Common myeloid progenitor, CD34-positive (primary cell): ENCODE measurements at regions of chr12 and their contacts with region 1.

Region 1: GRCh38 chr12:95848575-95849388 is 10.0 kb upstream of the SNRPF start:
- DNase-seq: peak; percentile 38 to 56 (median 39)
- H3K4me3 ChIP-seq: no peak overlapping the region
- H3K27ac ChIP-seq: no peak overlapping the region
- H3K4me1 ChIP-seq: peaks cover 0 to 11% (median 5%) of the 10 kb centered on the region in 4 experiments
- H3K27me3 ChIP-seq: peaks cover 0 to 52% (median 15%) of the 10 kb centered on the region in 5 experiments

Region 2: DNA sequence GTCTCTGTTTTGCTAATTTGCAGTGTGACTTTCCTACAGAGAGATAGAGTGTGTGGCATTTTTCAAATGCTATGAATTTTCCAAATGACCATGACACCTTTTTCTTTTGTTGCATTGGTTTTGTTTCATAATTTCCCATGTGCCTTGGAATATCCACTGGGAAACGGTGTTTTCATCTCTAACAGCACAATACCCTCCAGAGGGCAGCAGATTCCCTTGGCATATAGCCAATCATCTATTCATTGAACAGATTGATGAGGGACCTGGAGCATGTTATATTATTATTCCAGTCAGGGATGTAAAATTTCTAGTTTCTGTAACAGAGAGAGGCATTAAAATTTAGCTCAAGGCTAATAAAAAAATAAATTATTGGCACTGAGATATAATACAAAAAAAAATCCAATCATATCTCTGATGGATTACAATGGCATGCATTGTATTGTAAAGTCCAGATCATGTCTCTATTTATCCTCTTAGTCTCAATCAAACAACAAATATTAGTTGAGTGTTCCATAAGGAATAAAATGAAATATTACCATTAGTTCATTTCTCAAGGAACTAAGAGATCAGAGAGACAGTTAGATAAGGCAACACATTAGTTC is 28.6 kb before region 1 on chr12:
- CTCF ChIA-PET with region 1: interaction called, 10 read pairs
- POLR2A ChIA-PET with region 1: no interaction called
- DNase-seq: peak; percentile 33 to 42 (median 41)
- H3K4me3 ChIP-seq: no peak overlapping the region
- H3K27ac ChIP-seq: no peak overlapping the region
- H3K4me1 ChIP-seq: no peaks in the 10 kb centered on the region
- H3K27me3 ChIP-seq: peaks cover 0 to 8% (median 3%) of the 10 kb centered on the region in 5 experiments

Region 3: DNA sequence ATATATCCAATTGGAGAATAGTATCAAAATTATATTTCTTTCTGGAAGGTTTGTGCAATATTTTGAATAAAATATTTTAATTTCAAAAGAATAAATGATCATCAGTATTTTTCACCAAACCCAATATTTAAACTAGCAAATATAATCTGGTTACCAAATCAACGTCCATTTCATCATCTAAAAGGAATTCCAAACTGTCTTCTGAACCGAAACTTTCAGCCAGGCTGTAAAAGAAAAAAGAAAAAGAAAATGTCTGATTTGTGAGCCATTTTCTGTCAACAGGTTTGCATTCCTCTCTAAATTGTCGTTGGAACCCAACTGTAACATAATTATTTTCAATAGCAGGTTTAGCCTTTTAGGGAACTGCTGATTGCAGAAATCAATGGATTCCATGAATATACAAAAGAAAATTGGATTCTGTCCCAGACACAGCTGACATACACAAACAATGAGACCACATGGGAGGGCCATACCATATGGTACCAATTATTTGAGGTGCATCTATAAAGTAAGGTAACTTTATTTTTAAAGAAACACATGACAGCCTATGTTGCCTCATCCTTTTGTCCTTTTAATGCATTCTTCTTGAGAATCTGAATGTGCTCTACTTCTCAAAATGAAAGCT is 32.7 kb after region 1 on chr12:
- CTCF ChIA-PET with region 1: no interaction called
- POLR2A ChIA-PET with region 1: no interaction called
- DNase-seq: no peak
- H3K4me3 ChIP-seq: no peak overlapping the region
- H3K27ac ChIP-seq: no peak overlapping the region
- H3K4me1 ChIP-seq: no peaks in the 10 kb centered on the region
- H3K27me3 ChIP-seq: peaks cover 0 to 3% (median 0%) of the 10 kb centered on the region in 5 experiments